AG04449 (cell line): ENCODE measurements at regions of chr7 and their contacts with region 1.

Region 1: GRCh38 chr7:128855559-128855958 is 7.1 kb upstream of the ATP6V1F start:
- DNase-seq: no peak
- H3K4me3 ChIP-seq: no peak overlapping the region
- CTCF ChIP-seq: no peak

Region 2: GRCh38 chr7:128398016-128398840 is 457.3 kb before region 1 on chr7:
- CTCF ChIA-PET with region 1: no interaction called
- POLR2A ChIA-PET with region 1: no interaction called
- DNase-seq: no peak
- H3K4me3 ChIP-seq: no peak overlapping the region
- CTCF ChIP-seq: peak; percentile 86

Region 3: GRCh38 chr7:128841921-128842651 is 13.5 kb before region 1 on chr7:
- CTCF ChIA-PET with region 1: interaction called, 48 read pairs
- POLR2A ChIA-PET with region 1: no interaction called
- DNase-seq: no peak
- H3K4me3 ChIP-seq: no peak overlapping the region
- CTCF ChIP-seq: peak; percentile 69

Region 4: DNA sequence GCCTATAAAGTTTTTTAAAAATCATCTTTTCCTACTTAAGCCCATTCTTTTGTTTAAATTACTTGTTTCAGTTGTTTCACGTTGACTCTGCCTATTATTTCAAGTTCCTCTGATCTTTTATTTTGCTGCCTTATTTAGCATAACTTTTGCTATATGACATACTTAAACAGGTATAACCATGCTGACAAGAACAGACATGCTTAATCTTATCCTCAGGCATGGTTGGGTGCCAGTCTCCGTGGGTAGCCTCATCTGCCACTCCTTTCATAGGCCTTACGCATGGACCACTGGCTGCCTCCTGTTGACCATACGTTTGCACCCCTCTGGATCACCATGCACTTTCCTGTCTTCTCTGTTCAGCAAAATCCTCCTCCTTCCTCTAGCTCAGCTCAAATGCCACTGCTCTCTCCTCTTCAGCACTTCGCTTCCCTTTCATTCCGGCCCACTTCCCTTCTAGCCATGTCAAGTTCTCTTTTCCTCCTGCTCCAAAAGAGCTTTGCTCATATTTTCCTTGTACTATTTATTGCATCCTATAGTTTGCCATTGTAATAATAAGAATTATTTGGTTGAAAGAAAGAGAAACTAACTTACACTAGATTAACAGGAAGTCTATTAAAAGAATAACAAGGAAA is 278.9 kb after region 1 on chr7:
- CTCF ChIA-PET with region 1: no interaction called
- POLR2A ChIA-PET with region 1: no interaction called
- DNase-seq: no peak
- H3K4me3 ChIP-seq: no peak overlapping the region
- CTCF ChIP-seq: no peak